Spleen (tissue), 13 donors: ENCODE measurements at regions of chr1 and their contacts with region 1.

Region 1: DNA sequence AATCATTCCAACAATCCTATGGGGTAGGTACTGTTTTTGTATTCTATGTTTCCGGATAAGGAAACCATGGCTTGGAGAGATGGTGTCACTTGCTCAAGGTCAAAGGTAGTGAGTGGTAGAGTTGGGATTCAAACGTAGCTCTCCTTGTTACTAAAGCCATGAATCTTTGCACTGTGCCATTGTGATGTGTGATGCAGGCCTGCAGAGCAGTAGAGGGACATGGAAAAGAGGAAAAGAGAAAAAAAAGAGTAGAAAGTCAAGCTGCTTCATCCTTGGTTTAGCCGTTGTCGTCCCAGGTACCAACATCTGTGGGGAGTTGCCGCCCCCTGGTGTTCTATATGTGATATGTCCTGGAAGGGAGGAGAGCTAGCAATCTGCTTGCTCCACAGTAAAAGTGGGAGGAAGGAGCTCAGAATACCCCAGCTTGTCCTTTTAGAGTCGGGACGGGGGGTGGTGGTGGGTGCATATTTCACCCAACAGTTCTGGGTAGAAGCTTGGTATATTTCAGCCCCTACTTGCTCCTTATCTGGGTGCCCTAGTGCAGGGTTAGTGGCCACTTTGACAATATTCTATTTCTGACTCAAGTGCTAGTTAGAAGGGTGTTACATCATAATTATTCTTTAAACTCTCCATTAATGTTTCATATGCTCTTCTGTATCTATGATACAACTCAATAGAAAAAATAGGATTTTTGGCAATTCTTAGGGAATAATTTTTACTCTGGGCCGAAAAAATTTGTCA is 98.4 kb downstream of the EBNA1BP2 start:
- DNase-seq: peak; percentile 88
- H3K4me3 ChIP-seq: no peak overlapping the region
- H3K27ac ChIP-seq: no peak overlapping the region
- H3K4me1 ChIP-seq: peaks cover under 1 to 25% (median 13%) of the 10 kb centered on the region in 6 donors
- H3K27me3 ChIP-seq: peaks cover 0 to 5% (median 0%) of the 10 kb centered on the region in 7 donors
- CTCF ChIP-seq: peak; percentile 83 to 94 (median 90)
- POLR2A ChIP-seq: no peak

Region 2: DNA sequence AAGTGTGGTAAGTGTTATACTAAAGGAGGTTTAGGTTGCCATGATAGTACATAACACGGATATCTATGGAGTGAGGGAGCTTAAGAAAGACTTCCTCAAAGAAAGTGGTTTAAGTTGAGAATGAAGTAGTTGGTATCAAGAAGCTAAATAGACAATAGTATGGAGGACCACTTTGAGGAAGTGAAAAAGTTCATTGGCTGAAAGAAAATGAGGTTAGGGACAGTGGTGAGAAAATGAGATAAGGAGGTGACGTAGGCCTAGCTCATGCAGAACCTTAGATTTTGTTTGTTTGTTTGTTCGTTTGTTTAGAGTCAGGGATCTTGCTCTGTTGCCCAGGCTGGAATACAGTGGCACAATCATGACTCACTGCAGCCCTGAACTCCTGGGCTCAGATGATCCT is 487.6 kb before region 1 on chr1:
- intact Hi-C with region 1: loop called (anchors 10 kb)
- DNase-seq: no peak
- H3K4me3 ChIP-seq: no peak overlapping the region
- H3K27ac ChIP-seq: no peak overlapping the region
- H3K4me1 ChIP-seq: no peaks in the 10 kb centered on the region
- H3K27me3 ChIP-seq: no peaks in the 10 kb centered on the region
- CTCF ChIP-seq: no peak
- POLR2A ChIP-seq: no peak

Region 3: DNA sequence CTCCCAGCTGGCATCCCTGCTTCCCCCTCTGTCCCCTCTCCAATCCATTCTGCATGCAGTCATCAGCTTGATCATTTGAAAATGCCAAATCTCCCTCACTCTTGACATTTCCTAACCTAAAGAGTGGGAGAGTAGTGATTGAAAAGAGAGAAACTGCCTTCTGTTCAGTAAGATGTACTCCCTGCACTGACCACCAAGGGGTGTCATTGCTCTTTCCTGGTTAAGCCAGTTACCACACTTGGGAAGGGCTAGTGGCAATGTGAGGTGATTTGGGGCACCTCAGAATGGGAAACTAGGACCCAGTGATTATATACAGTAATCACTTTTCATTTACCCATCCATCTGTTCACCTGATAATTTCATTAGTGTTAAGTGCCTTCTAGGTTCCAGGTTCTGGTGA is 295.8 kb before region 1 on chr1:
- intact Hi-C with region 1: loop called (anchors 5 kb)
- DNase-seq: no peak
- H3K4me3 ChIP-seq: no peak overlapping the region
- H3K27ac ChIP-seq: no peak overlapping the region
- H3K4me1 ChIP-seq: peaks cover 0 to 5% (median 0%) of the 10 kb centered on the region in 6 donors
- H3K27me3 ChIP-seq: no peaks in the 10 kb centered on the region
- CTCF ChIP-seq: peak; percentile 16 to 71 (median 55)
- POLR2A ChIP-seq: no peak

Region 4: DNA sequence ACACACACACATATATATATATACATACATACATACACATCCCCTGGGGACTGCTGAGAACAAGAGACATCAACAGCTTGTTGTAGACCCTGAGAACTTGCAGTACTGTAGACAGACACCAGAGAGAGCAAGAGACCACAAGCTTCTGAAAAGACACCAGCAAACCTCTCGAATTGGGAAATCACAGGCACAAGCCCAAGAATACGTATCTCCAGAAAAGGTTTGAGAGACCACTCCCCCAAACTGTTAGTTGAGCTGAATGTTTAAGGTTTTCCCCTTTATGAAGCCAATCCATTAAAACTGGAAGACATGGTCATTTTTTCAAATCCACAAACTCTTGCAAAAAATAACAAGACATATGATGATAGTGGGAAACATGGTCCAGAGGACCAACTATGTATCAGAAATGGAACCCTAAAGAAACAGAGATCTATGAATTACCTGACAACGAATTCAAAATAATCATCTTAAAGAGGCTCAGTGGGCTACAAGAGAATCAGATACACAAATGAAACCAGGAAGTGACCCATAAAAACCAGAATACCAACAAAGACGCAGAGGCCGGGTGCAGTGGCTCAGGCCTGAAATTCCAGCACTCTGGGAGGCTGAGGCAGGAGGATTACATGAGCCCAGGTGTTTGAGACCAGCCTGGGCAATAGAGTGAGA is 160.1 kb before region 1 on chr1:
- intact Hi-C with region 1: loop called (anchors 2 kb)
- DNase-seq: no peak
- H3K4me3 ChIP-seq: no peak overlapping the region
- H3K27ac ChIP-seq: no peak overlapping the region
- H3K4me1 ChIP-seq: peaks cover 0 to 5% (median 0%) of the 10 kb centered on the region in 6 donors
- H3K27me3 ChIP-seq: no peaks in the 10 kb centered on the region
- CTCF ChIP-seq: peak; percentile 60 to 95 (median 79)
- POLR2A ChIP-seq: no peak

Region 5: GRCh38 chr1:42981871-42982270 is 91.8 kb before region 1 on chr1:
- intact Hi-C with region 1: no loop called
- DNase-seq: no peak
- H3K4me3 ChIP-seq: no peak overlapping the region
- H3K27ac ChIP-seq: no peak overlapping the region
- H3K4me1 ChIP-seq: peaks cover 0 to 10% (median 3%) of the 10 kb centered on the region in 6 donors
- H3K27me3 ChIP-seq: no peaks in the 10 kb centered on the region
- CTCF ChIP-seq: no peak
- POLR2A ChIP-seq: no peak

Region 6: GRCh38 chr1:43007142-43007764 is 66.4 kb before region 1 on chr1:
- intact Hi-C with region 1: no loop called
- DNase-seq: no peak
- H3K4me3 ChIP-seq: no peak overlapping the region
- H3K27ac ChIP-seq: no peak overlapping the region
- H3K4me1 ChIP-seq: peaks cover 0 to 7% (median 0%) of the 10 kb centered on the region in 6 donors
- H3K27me3 ChIP-seq: peaks cover 0 to 32% (median 7%) of the 10 kb centered on the region in 7 donors
- CTCF ChIP-seq: no peak
- POLR2A ChIP-seq: no peak